ENCODE measurements at regions of chr17 and their contacts with region 1.

Region 1: DNA sequence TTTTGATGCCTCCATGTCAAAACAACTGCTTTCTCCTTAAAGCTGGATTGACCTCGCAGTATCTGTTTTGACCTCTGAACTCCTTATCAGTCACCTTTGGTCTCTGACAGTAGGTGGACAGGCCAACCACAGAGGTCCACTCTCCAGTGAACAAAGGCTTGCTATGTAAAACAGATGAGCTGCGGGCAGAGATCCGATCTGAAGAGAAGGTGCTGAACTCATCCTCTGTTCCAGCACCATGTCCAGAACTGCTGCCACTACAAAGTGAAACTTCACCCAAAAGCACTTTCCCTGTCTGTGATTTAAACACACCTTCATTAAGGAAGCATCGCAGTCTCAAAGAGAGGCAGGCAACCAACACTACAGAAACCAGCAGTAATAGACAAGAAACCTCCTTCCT is 117.3 kb upstream of the CORO6 start:
- DNase-seq: no peak
- H3K4me3 ChIP-seq: no peak overlapping the region
- H3K4me3 Mint-ChIP-seq: peak overlapping the region in 4 of 8 donors; percentile 15 to 58 (median 54)
- H3K27ac ChIP-seq: no peak overlapping the region
- H3K27ac Mint-ChIP-seq: peak overlapping the region; percentile 37 to 86 (median 70)
- H3K4me1 ChIP-seq: peaks cover 28% of the 10 kb centered on the region
- H3K4me1 Mint-ChIP-seq: peaks cover 31 to 56% (median 41%) of the 10 kb centered on the region in 4 donors
- H3K27me3 ChIP-seq: no peaks in the 10 kb centered on the region
- H3K27me3 Mint-ChIP-seq: no peaks in the 10 kb centered on the region

Region 2: GRCh38 chr17:29671661-29672060 is 68.4 kb before region 1 on chr17:
- CTCF ChIA-PET with region 1: no interaction called
- POLR2A ChIA-PET with region 1: no interaction called
- intact Hi-C with region 1: loop called (anchors 2 kb)
- DNase-seq: no peak
- H3K4me3 ChIP-seq: no peak overlapping the region
- H3K4me3 Mint-ChIP-seq: no peak overlapping the region
- H3K27ac ChIP-seq: no peak overlapping the region
- H3K27ac Mint-ChIP-seq: peak overlapping the region in 2 of 7 donors; percentile 32 to 72
- H3K4me1 ChIP-seq: peaks cover 10% of the 10 kb centered on the region
- H3K4me1 Mint-ChIP-seq: peaks cover 7 to 11% (median 9%) of the 10 kb centered on the region in 4 donors
- H3K27me3 ChIP-seq: no peaks in the 10 kb centered on the region
- H3K27me3 Mint-ChIP-seq: no peaks in the 10 kb centered on the region

Region 3: GRCh38 chr17:29705386-29705785 is 34.6 kb before region 1 on chr17:
- CTCF ChIA-PET with region 1: no interaction called
- POLR2A ChIA-PET with region 1: interaction called, 11 read pairs
- intact Hi-C with region 1: no loop called
- DNase-seq: peak in 4 of 5 donors; percentile 26 to 39 (median 28)
- H3K4me3 ChIP-seq: peak overlapping the region in 1 of 2 donors; percentile 16
- H3K4me3 Mint-ChIP-seq: peak overlapping the region; percentile 58 to 87 (median 76)
- H3K27ac ChIP-seq: peak overlapping the region; percentile 68
- H3K27ac Mint-ChIP-seq: peak overlapping the region; percentile 91 to 100 (median 98)
- H3K4me1 ChIP-seq: peaks cover 54% of the 10 kb centered on the region
- H3K4me1 Mint-ChIP-seq: peaks cover 30 to 61% (median 41%) of the 10 kb centered on the region in 4 donors
- H3K27me3 ChIP-seq: no peaks in the 10 kb centered on the region
- H3K27me3 Mint-ChIP-seq: no peaks in the 10 kb centered on the region

Region 4: DNA sequence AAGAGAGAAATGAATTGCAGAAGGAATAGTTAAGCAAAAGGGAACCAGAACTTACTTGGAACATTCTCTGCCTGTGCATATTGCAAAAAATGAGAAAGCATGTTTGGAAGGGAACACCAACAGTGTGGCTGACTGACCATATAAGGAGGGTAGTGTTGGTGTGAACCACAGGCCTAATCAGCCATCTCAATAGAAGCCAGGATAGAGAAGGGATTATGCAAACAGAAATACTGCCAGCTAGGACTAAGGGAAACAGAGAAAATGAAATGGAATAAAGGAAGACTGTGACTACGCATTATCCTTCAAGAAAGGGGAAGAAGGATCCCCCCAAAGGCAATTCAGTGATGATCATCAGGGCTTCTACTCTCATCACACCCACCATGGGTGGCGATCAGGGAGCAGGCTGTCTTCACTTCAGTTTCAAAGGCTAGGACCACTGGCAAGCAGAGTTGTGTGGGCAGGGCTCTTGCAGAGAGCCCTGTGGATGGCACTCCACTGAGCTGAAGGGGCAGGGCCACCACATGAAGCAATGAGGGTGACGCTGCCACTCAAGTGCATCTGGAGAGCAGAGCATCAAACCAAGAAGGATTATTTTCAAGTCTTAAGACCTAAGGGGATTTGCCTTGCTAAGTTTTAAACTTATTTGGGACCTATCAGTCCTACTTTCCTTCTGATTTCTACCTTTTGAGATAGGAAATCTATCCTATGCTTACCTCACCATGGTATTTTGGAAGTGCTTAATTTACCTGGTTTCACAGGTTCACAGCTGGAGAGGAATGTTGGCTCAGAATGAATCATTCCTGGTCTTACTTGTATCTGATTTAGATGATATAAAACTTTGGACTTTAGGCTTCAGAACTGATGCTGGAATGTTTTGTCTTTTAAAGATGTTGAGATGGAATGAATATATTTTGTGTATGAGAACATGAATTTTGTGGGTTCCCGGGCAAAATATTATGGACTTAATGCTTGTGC is 49.5 kb after region 1 on chr17:
- CTCF ChIA-PET with region 1: no interaction called
- POLR2A ChIA-PET with region 1: no interaction called
- intact Hi-C with region 1: loop called (anchors 5 kb)
- DNase-seq: no peak
- H3K4me3 ChIP-seq: no peak overlapping the region
- H3K4me3 Mint-ChIP-seq: no peak overlapping the region
- H3K27ac ChIP-seq: no peak overlapping the region
- H3K27ac Mint-ChIP-seq: peak overlapping the region in 3 of 7 donors; percentile 44 to 87 (median 76)
- H3K4me1 ChIP-seq: no peaks in the 10 kb centered on the region
- H3K4me1 Mint-ChIP-seq: no peaks in the 10 kb centered on the region
- H3K27me3 ChIP-seq: no peaks in the 10 kb centered on the region
- H3K27me3 Mint-ChIP-seq: no peaks in the 10 kb centered on the region